ENCODE measurements at regions of chr1 and their contacts with region 1.

Region 1: GRCh38 chr1:39877980-39878956 is 5.0 kb downstream of the TRIT1 start:
- DNase-seq: no peak
- H3K4me3 ChIP-seq: peak overlapping the region in 1 of 4 experiments; percentile 2; a peak in 1 of 8 replicates
- H3K27ac ChIP-seq: no peak overlapping the region
- H3K4me1 ChIP-seq: peaks cover 1 to 6% (median 4%) of the 10 kb centered on the region in 4 experiments; a peak in 4 of 7 replicates
- H3K27me3 ChIP-seq: no peaks in the 10 kb centered on the region
- CTCF ChIP-seq: no peak
- EP300 ChIP-seq: no peak
- POLR2A ChIP-seq: no peak
- RAD21 ChIP-seq: no peak

Region 2: GRCh38 chr1:39683591-39684312 is 194.5 kb before region 1 on chr1:
- CTCF ChIA-PET with region 1: no interaction called
- POLR2A ChIA-PET with region 1: no interaction called
- DNase-seq: peak in 1 of 2 experiments; percentile 65
- H3K4me3 ChIP-seq: peak overlapping the region in 2 of 4 experiments; percentile 10 to 50; a peak in 3 of 8 replicates
- H3K27ac ChIP-seq: no peak overlapping the region
- H3K4me1 ChIP-seq: peaks cover 0 to 5% (median 1%) of the 10 kb centered on the region in 4 experiments; a peak in 2 of 7 replicates
- H3K27me3 ChIP-seq: peaks cover 68 to 96% (median 89%) of the 10 kb centered on the region in 4 experiments
- CTCF ChIP-seq: no peak
- EP300 ChIP-seq: no peak
- POLR2A ChIP-seq: no peak
- RAD21 ChIP-seq: no peak

Region 3: GRCh38 chr1:39892601-39893595 is 14.6 kb after region 1 on chr1:
- CTCF ChIA-PET with region 1: interaction called, 9 read pairs
- POLR2A ChIA-PET with region 1: interaction called, 24 read pairs
- DNase-seq: no peak
- H3K4me3 ChIP-seq: peak overlapping the region; percentile 2 to 41 (median 6); a peak in 5 of 8 replicates
- H3K27ac ChIP-seq: peak overlapping the region; percentile 77
- H3K4me1 ChIP-seq: peaks cover 19 to 44% (median 28%) of the 10 kb centered on the region in 4 experiments
- H3K27me3 ChIP-seq: no peaks in the 10 kb centered on the region
- CTCF ChIP-seq: no peak
- EP300 ChIP-seq: 0 out of 3 replicates have a peak, but pooled peaks of 1 of the 2 experiments have one; percentile 27
- POLR2A ChIP-seq: peak; percentile 30 to 41; a peak in 2 of 3 replicates
- RAD21 ChIP-seq: peak; percentile 8 to 17; a peak in 2 of 4 replicates

Region 4: DNA sequence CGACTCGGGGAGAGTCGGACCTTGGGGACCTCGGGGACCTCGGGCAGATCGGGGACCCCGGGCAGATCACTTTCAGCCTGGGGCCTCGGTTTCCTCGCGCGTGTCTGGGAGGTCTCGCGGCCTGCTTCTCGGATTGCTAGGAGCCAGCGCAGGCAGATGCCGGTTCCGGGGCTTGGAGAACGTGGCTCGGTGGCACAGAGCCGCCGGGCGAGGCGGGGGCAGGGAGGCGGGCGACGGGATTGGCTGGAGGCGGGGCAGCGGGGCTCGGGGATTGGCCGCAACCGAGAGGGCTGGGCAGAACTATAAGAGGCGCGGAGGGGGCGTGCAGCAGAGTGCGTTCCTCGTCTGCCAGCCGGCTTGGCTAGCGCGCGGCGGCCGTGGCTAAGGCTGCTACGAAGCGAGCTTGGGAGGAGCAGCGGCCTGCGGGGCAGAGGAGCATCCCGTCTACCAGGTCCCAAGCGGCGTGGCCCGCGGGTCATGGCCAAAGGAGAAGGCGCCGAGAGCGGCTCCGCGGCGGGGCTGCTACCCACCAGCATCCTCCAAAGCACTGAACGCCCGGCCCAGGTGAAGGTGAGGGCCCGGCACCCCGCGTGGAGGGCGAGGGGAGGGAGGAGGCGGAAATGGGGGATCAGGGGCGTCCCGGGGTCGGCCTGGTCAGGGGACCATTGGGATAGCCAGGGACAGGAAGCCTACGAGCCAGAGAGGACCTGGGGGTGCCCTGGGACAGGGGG is 76.7 kb after region 1 on chr1 and contains the start of gene MFSD2A:
- CTCF ChIA-PET with region 1: no interaction called
- POLR2A ChIA-PET with region 1: no interaction called
- DNase-seq: peak; percentile 69 to 95
- H3K4me3 ChIP-seq: peak within 1 kb of the TSS; percentile 50 to 78 (median 69)
- H3K27ac ChIP-seq: no peak within 1 kb of the TSS
- H3K4me1 ChIP-seq: peaks cover under 1 to 9% (median 7%) of the 10 kb centered on the region in 4 experiments
- H3K27me3 ChIP-seq: peaks cover 0 to 16% (median 12%) of the 10 kb centered on the region in 4 experiments; a peak in 5 of 7 replicates
- CTCF ChIP-seq: no peak
- EP300 ChIP-seq: no peak
- POLR2A ChIP-seq: peak; percentile 84 to 89
- RAD21 ChIP-seq: no peak
- total RNA-seq, gene MFSD2A: 25.9 and 26.6 TPM in 2 replicates

Region 5: DNA sequence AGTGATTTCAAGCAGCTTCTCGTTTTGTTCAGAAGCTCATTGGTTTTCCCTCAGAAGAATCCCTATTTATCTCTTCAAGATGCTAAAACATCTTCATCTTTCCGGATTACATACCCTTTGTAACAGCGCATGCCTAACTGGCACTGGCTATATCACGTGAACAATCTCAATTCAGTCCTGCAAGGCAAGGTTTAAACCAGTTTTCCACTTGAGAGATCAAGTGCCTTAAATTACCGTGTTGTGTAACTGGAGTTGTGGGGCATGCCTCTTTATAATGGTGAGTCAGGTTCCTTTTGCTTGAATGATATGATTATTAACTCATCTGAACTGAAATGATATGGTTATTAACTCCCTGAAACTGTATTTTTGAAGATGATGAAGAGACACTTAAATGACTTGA is 561.0 kb after region 1 on chr1:
- CTCF ChIA-PET with region 1: no interaction called
- POLR2A ChIA-PET with region 1: no interaction called
- DNase-seq: no peak
- H3K4me3 ChIP-seq: no peak overlapping the region
- H3K27ac ChIP-seq: no peak overlapping the region
- H3K4me1 ChIP-seq: no peaks in the 10 kb centered on the region
- H3K27me3 ChIP-seq: no peaks in the 10 kb centered on the region
- CTCF ChIP-seq: no peak
- EP300 ChIP-seq: no peak
- POLR2A ChIP-seq: no peak
- RAD21 ChIP-seq: no peak